ENCODE measurements at regions of chr7 and their contacts with region 1.

Region 1: DNA sequence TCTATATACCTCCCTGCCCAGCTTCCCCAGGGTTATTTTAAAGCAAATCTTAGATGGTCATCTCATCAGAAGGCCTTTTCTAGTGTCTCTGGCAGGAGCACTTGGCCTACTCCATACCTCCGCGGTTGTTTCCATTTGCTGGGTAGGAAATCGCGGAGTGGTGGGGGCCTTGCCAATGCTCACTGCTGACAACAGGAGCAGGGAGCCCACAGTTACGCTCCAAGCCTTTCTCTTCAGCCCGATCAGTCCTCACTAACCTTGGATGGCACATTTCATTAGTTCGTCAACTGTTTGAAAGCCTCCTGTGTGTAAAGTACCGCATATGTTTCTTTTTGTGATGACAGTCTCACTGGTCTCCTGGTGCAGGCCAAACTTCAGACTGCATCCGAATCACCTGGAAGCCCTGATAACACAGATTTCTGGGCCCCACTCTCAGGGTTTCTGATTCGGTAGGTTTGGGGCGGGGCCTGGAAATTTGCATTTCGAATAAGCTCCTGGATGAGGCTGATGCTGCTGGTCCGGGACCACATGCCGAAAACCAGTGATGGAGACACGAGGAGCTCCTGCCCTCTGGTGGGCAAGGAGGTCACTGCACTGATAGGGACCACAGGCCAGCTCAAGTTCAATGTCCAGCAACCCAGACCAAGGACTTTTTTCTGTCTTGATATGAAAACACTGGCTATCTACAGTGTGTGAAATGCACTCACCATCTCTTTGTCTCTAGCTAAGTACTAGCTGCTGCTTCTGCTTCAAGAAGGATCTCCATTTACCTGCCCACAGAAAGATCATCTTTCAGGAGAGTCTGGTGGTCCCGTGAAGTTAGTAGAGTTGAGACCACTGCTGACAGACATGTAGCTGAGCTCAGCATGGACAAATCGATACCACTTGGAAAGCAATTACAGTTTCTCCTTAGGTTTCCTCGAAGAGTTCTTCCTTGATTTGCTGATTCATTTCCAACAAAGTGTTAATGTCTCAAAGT is 14.0 kb downstream of the LRGUK start:
- DNase-seq: peak; percentile 66
- H3K4me3 Mint-ChIP-seq: no peak overlapping the region
- H3K27ac Mint-ChIP-seq: no peak overlapping the region
- H3K4me1 Mint-ChIP-seq: no peaks in the 10 kb centered on the region
- H3K27me3 Mint-ChIP-seq: no peaks in the 10 kb centered on the region
- CTCF ChIP-seq: peak; percentile 87

Region 2: DNA sequence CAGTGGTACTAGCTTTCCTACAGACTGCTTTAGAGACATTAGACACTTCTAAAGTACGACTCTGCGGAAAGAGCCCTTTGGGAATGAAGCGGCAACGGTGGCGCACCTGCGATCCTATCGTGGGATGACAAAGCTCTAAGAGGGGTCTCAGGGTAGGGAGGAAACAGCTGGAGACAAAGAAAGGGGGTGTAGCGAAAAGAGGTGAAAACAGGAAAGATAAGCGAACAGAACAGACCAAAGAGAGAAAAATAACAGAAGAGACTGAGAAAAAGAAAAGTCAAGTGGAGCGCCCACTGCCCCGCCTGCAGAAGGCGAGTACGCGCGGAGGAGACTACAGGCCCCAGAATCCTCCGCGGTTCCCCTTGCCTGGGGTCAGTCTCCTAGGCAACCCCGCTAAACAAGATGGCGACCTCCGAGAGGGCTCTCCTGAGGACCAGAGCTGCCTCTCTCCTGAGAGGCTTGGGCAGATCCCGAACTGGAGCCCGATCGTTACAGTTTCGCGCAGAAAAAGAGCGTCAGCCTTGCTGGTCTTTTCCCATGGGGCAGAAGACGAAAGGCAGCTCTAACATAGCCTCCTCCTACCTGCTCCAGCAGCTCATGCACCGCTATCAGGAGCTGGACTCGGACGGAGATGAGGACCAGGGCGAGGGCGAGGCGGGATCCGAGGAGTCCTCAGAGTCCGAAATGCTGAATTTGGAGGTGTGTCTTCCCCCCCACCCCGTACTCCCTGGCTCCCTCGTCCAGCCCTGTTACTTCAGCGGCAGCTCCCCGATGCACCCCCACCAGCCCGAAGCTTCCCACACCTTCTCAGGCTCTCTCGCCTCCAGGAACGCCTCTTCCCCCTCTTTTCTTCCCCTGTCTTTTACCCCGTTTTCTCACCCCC is 14.0 kb before region 1 on chr7 and contains the start of gene LRGUK:
- CTCF ChIA-PET with region 1: interaction called, 23 read pairs
- POLR2A ChIA-PET with region 1: interaction called, 5 read pairs
- intact Hi-C with region 1: no loop called
- DNase-seq: peak; percentile 70
- H3K4me3 Mint-ChIP-seq: peak within 1 kb of the TSS; percentile 74
- H3K27ac Mint-ChIP-seq: peak within 1 kb of the TSS; percentile 59
- H3K4me1 Mint-ChIP-seq: peaks cover 11% of the 10 kb centered on the region
- H3K27me3 Mint-ChIP-seq: peaks cover 64% of the 10 kb centered on the region
- CTCF ChIP-seq: no peak
- total RNA-seq, gene LRGUK: 0.19 and 0.29 TPM in 2 replicates

Region 3: GRCh38 chr7:134154581-134155130 is 13.5 kb after region 1 on chr7:
- CTCF ChIA-PET with region 1: interaction called, 27 read pairs
- POLR2A ChIA-PET with region 1: interaction called, 3 read pairs
- intact Hi-C with region 1: no loop called
- DNase-seq: no peak
- H3K4me3 Mint-ChIP-seq: no peak overlapping the region
- H3K27ac Mint-ChIP-seq: no peak overlapping the region
- H3K4me1 Mint-ChIP-seq: no peaks in the 10 kb centered on the region
- H3K27me3 Mint-ChIP-seq: peaks cover 12% of the 10 kb centered on the region
- CTCF ChIP-seq: no peak

Region 4: GRCh38 chr7:134184767-134185166 is 43.6 kb after region 1 on chr7:
- CTCF ChIA-PET with region 1: no interaction called
- POLR2A ChIA-PET with region 1: no interaction called
- intact Hi-C with region 1: no loop called
- DNase-seq: peak; percentile 38
- H3K4me3 Mint-ChIP-seq: no peak overlapping the region
- H3K27ac Mint-ChIP-seq: peak overlapping the region; percentile 27
- H3K4me1 Mint-ChIP-seq: peaks cover 14% of the 10 kb centered on the region
- H3K27me3 Mint-ChIP-seq: no peaks in the 10 kb centered on the region
- CTCF ChIP-seq: no peak

Measured in MCF 10A (cell line).